MCF 10A (cell line): ENCODE measurements at regions of chr15 and their contacts with region 1.

Region 1: DNA sequence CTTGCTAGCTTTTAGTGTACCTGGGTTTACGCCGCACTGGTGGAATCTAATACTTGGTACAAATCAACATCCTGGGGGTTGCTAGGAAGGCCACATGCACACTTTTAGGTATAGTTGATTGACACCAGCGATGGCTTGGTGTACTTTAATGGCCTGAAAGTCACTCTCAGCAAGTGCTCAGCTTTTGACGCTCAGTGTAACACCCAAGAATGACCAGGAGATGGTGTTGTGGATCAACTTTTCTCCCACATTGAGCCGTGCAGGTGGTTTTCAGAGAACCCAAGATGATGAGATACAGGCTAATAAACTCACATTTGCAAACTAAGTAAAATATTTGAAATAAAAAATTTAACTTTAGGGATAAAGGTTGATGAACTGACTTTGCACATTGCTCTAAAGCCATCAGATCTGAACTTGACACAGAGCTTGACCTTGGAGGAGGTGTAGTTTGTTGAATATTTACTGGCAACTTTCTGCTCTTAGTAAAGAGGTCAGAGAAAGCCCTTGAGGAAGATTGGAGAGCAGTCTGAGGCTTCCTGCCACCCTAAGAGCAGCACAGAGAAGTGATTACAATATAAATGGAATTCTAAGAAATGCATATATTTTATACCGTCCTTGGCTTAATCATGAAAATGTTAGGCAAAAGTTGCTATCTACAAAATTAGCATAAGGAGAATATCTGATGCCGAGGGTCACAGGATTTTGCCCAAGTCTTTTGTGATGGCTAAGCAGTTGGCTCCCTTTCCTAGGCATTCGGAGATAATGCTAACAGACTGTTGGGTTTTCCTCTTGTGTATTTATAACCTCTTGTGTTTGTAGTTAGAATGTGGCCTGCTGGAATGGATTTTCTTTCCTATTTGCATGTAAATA is 143.4 kb upstream of the RASGRP1 start:
- DNase-seq: peak; percentile 68
- H3K4me3 Mint-ChIP-seq: no peak overlapping the region
- H3K27ac Mint-ChIP-seq: no peak overlapping the region
- H3K4me1 Mint-ChIP-seq: no peaks in the 10 kb centered on the region
- H3K27me3 Mint-ChIP-seq: no peaks in the 10 kb centered on the region
- CTCF ChIP-seq: peak; percentile 76

Region 2: GRCh38 chr15:38724827-38725226 is 16.8 kb after region 1 on chr15:
- CTCF ChIA-PET with region 1: interaction called, 18 read pairs
- POLR2A ChIA-PET with region 1: no interaction called
- intact Hi-C with region 1: no loop called
- DNase-seq: no peak
- H3K4me3 Mint-ChIP-seq: no peak overlapping the region
- H3K27ac Mint-ChIP-seq: no peak overlapping the region
- H3K4me1 Mint-ChIP-seq: no peaks in the 10 kb centered on the region
- H3K27me3 Mint-ChIP-seq: no peaks in the 10 kb centered on the region
- CTCF ChIP-seq: no peak

Region 3: GRCh38 chr15:38991126-38991525 is 283.1 kb after region 1 on chr15:
- CTCF ChIA-PET with region 1: interaction called, 3 read pairs
- POLR2A ChIA-PET with region 1: no interaction called
- intact Hi-C with region 1: loop called (anchors 5 kb)
- DNase-seq: peak; percentile 52
- H3K4me3 Mint-ChIP-seq: no peak overlapping the region
- H3K27ac Mint-ChIP-seq: no peak overlapping the region
- H3K4me1 Mint-ChIP-seq: peaks cover 10% of the 10 kb centered on the region
- H3K27me3 Mint-ChIP-seq: no peaks in the 10 kb centered on the region
- CTCF ChIP-seq: peak; percentile 41